ENCODE measurements at regions of chr1 and their contacts with region 1.

Region 1: DNA sequence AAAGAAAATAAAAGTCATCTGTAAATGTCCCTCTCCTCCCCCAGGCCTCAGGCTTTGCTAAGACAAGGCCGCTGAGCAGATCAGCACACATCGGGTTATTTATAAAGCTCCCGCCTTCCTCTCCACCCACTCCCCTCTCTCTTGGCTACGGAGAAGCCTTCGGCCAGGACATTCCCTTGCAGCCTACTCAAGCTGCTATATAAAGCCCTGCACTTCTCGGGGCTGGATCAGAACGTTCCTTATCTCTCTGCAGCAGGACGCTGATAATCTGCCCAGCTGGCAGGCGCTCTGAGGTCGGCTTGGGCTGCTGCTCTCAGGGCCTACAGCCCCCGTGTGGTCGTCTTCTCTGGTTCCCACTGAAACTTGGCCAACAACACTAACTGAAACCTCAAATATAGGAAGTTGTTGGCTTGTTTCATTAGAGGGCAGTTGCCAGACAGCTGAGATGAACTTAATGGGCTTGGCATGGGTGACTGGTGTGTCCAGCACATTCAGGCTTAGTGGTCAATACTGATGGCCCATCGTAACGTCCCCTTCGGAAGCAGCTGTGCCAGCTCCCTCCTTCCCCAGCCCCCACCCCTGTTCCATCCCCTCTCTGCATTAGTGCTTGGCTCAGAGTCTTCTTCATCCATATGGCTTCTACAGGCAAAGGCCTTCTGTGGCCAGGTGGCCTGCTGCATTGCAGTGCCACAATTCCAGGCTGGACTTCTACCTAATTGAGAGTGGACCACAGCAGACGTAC is 64.6 kb downstream of the IER5 start:
- DNase-seq: no peak
- H3K4me3 ChIP-seq: no peak overlapping the region
- H3K27ac ChIP-seq: no peak overlapping the region
- H3K4me1 ChIP-seq: peaks cover 0 to 4% (median 0%) of the 10 kb centered on the region in 4 experiments; a peak in 2 of 7 replicates
- H3K27me3 ChIP-seq: no peaks in the 10 kb centered on the region
- CTCF ChIP-seq: peak; percentile 15 to 32 (median 27); a peak in 3 of 4 replicates
- EP300 ChIP-seq: no peak
- POLR2A ChIP-seq: no peak
- RAD21 ChIP-seq: peak; percentile 21 to 43

Region 2: GRCh38 chr1:180849036-180849775 is 303.9 kb before region 1 on chr1:
- CTCF ChIA-PET with region 1: no interaction called
- POLR2A ChIA-PET with region 1: no interaction called
- DNase-seq: no peak
- H3K4me3 ChIP-seq: no peak overlapping the region
- H3K27ac ChIP-seq: no peak overlapping the region
- H3K4me1 ChIP-seq: no peaks in the 10 kb centered on the region; a peak in 1 of 7 replicates
- H3K27me3 ChIP-seq: no peaks in the 10 kb centered on the region
- CTCF ChIP-seq: no peak
- EP300 ChIP-seq: no peak
- POLR2A ChIP-seq: no peak
- RAD21 ChIP-seq: no peak

Region 3: DNA sequence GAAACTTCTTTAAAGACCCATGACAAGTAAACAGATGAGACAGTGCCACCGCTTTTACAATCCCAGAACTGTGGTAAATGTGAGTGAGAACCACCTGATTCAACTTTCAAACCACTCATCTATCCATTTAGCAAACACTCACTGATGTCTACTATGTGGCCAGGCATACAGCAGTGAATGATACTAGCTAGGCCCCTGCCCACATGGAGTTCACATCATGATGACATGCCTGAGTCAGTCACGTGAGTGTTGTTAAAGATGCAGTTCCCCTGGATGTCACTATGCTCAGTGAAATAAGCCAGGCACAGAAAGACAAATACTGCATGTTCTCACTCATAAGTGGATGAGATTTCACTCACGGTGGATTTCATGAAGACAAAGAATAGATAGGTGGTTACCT is 158.8 kb before region 1 on chr1:
- CTCF ChIA-PET with region 1: no interaction called
- POLR2A ChIA-PET with region 1: no interaction called
- DNase-seq: no peak
- H3K4me3 ChIP-seq: no peak overlapping the region
- H3K27ac ChIP-seq: no peak overlapping the region
- H3K4me1 ChIP-seq: no peaks in the 10 kb centered on the region
- H3K27me3 ChIP-seq: no peaks in the 10 kb centered on the region
- CTCF ChIP-seq: no peak
- EP300 ChIP-seq: no peak
- POLR2A ChIP-seq: no peak
- RAD21 ChIP-seq: no peak

Region 4: GRCh38 chr1:181033799-181034451 is 119.1 kb before region 1 on chr1 and contains the start of gene MR1:
- CTCF ChIA-PET with region 1: interaction called, 10 read pairs
- POLR2A ChIA-PET with region 1: no interaction called
- DNase-seq: no peak
- H3K4me3 ChIP-seq: no peak within 1 kb of the TSS
- H3K27ac ChIP-seq: no peak within 1 kb of the TSS
- H3K4me1 ChIP-seq: no peaks in the 10 kb centered on the region
- H3K27me3 ChIP-seq: no peaks in the 10 kb centered on the region
- CTCF ChIP-seq: no peak
- EP300 ChIP-seq: no peak
- POLR2A ChIP-seq: no peak
- RAD21 ChIP-seq: no peak
- total RNA-seq, gene MR1: 0.19 TPM in 1 of 2 replicates, not detected in the other

Region 5: DNA sequence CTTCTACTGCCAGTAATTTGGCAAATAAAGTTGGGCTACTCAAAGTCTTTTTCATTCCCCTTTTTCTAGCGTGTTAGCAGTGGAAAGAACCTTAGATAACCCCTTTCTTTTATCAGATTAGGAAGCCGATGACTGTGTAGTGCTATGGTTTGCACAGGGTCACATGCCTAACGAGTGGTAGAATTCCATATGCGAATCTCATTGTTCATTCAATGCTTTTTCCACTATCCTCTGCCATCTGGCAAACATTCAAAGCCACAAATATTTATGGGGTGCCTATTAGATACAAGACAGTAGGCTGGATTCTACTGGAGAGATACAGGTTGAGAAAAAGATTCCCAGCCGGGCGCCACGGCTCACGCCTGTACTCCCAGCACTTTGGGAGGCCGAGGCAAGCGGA is 79.4 kb before region 1 on chr1:
- CTCF ChIA-PET with region 1: no interaction called
- POLR2A ChIA-PET with region 1: no interaction called
- DNase-seq: no peak
- H3K4me3 ChIP-seq: no peak overlapping the region
- H3K27ac ChIP-seq: no peak overlapping the region
- H3K4me1 ChIP-seq: peaks cover 0 to 3% (median 0%) of the 10 kb centered on the region in 4 experiments; a peak in 1 of 7 replicates
- H3K27me3 ChIP-seq: no peaks in the 10 kb centered on the region
- CTCF ChIP-seq: no peak
- EP300 ChIP-seq: no peak
- POLR2A ChIP-seq: no peak
- RAD21 ChIP-seq: no peak

Region 6: DNA sequence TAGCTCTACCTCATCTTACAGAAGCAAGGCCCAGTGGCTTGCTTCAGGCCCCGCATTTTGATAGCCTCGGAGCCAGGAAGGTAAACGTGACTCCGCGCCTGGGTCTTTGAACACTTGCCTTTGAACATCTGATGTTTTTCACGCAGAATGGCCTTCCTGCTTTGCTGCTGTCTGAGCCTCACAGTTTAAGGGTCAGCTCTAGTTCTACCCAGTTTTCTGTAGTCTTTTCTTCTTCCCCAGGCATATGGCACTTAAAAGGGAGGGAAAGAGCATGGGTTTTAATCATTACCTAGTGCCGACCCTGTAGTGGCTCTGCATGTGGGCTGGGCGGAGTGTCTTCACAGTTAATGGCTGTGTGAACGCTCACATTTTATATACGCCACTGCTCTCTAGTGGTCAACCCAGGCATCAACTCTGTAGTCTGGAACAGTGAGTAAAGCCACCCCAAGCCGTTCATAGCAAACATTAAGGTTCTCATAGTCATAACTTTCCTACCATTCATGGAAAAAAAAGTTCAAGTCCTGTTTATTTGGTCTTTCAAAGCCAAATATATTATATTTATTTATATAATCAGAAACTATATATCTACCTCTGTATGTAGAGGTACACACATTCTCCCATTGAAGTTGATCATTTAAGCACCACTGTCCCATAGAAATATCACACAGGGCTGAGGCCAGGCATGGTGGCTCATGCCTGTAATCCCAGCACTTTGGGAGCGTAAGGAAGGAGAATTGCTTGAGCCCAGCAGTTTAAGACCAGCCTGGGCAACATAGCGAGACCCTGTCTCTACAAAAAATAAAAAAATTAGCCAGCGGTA is 13.5 kb after region 1 on chr1:
- CTCF ChIA-PET with region 1: interaction called, 12 read pairs
- POLR2A ChIA-PET with region 1: no interaction called
- DNase-seq: peak in 1 of 2 experiments; percentile 80
- H3K4me3 ChIP-seq: no peak overlapping the region
- H3K27ac ChIP-seq: no peak overlapping the region
- H3K4me1 ChIP-seq: no peaks in the 10 kb centered on the region
- H3K27me3 ChIP-seq: peaks cover 0 to 2% (median 0%) of the 10 kb centered on the region in 4 experiments; a peak in 1 of 7 replicates
- CTCF ChIP-seq: peak; percentile 32 to 88 (median 83)
- EP300 ChIP-seq: no peak
- POLR2A ChIP-seq: no peak
- RAD21 ChIP-seq: peak; percentile 96 to 97

Region 7: GRCh38 chr1:181206513-181206912 is 53.5 kb after region 1 on chr1:
- CTCF ChIA-PET with region 1: no interaction called
- POLR2A ChIA-PET with region 1: no interaction called
- DNase-seq: no peak
- H3K4me3 ChIP-seq: no peak overlapping the region
- H3K27ac ChIP-seq: no peak overlapping the region
- H3K4me1 ChIP-seq: peaks cover 5 to 15% (median 12%) of the 10 kb centered on the region in 4 experiments
- H3K27me3 ChIP-seq: no peaks in the 10 kb centered on the region
- CTCF ChIP-seq: no peak
- EP300 ChIP-seq: no peak
- POLR2A ChIP-seq: no peak
- RAD21 ChIP-seq: no peak